ENCODE measurements at regions of chr11 and their contacts with region 1.

Region 1: DNA sequence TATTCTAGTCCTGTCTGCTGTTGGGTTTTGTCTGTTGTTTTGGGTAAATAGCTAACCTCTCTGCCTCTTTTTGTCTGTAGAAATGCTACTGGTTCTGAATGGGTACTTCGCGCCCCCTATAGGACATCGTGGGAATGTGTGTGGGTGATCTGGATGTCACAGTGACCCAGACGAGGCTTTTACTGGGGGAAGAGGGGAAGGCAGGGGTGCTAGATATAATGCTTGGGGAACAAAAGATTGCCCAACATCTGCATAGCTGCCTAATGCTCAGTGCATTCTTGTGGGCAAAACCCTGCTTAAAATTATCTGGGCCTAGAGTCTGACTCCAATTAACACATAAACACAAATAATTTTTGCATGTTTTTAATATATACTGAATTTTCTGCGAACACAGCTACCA is 57.7 kb downstream of the BMAL1 start:
- DNase-seq: no peak
- ATAC-seq: peak; percentile 45
- H3K4me3 ChIP-seq: no peak overlapping the region
- H3K27ac ChIP-seq: no peak overlapping the region
- H3K4me1 ChIP-seq: peaks cover 39% of the 10 kb centered on the region
- H3K27me3 ChIP-seq: no peaks in the 10 kb centered on the region
- CTCF ChIP-seq: peak; percentile 83 to 89 (median 85)
- EP300 ChIP-seq: no peak
- POLR2A ChIP-seq: no peak
- RAD21 ChIP-seq: peak; percentile 87

Region 2: DNA sequence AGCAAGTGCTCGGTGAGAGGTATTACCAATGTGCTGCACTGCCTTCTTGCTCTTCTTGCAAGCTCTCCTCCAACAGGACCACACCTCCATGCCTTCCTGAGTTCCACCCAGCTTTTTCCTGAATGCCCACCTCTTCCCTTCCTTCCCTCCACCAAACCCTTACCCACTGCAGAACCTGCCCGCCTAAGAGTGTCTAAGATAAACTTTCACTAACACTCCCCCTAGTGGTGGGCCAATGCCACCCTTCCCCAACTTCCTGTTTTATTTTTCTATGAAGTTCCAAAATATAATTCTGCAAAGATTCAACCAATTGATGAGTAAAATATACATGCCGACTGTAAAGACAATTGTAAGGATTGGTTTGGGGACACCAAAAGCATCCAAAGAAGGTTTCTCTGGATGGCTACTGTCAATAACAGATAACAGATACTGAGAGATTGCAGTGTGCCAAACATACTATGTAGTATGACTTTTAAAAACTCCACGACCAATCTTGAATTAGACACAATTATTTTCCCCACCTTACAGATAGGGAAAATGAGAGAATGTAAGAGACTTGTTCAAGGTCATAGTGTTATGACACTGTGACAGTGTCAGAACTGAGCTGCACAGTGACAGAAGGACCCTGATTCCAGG is 96.3 kb before region 1 on chr11:
- CTCF ChIA-PET with region 1: interaction called, 29 read pairs
- POLR2A ChIA-PET with region 1: no interaction called
- RAD21 ChIA-PET with region 1: interaction called, 3 read pairs
- SMC1A ChIA-PET with region 1: interaction called, 28 read pairs
- in situ Hi-C with region 1: no loop called
- intact Hi-C with region 1: no loop called
- DNase-seq: no peak
- ATAC-seq: peak; percentile 93
- H3K4me3 ChIP-seq: no peak overlapping the region
- H3K27ac ChIP-seq: no peak overlapping the region
- H3K4me1 ChIP-seq: no peaks in the 10 kb centered on the region
- H3K27me3 ChIP-seq: peaks cover 0 to 3% of the 10 kb centered on the region in 2 experiments; a peak in 2 of 4 replicates
- CTCF ChIP-seq: peak; percentile 71 to 91 (median 86)
- EP300 ChIP-seq: no peak
- POLR2A ChIP-seq: no peak
- RAD21 ChIP-seq: peak; percentile 63

Region 3: DNA sequence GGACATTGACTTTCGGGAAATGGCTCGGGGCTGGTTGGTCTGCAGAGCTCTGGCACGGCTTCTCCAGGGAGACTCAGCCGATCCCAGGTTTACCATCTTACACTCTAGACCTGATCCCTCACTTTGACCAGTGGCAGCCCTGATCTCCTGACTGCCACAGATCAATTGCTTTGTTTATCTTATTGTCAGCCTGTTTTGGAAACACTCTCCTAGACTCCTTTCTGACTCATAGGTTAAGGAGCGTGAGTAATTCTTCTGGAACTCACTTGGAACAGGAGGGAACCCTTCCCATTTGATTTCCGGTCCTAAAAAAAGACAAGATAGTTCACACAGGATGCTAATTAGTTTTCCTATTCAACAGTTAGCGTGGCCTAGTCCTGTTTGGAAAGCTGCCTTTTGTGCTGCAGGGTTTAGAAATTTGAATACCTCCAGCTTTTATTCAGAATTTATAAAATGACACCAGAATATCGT is 73.7 kb before region 1 on chr11:
- CTCF ChIA-PET with region 1: interaction called, 253 read pairs
- POLR2A ChIA-PET with region 1: interaction called, 3 read pairs
- RAD21 ChIA-PET with region 1: interaction called, 7 read pairs
- SMC1A ChIA-PET with region 1: interaction called, 19 read pairs
- in situ Hi-C with region 1: no loop called
- intact Hi-C with region 1: no loop called
- DNase-seq: no peak
- ATAC-seq: no peak
- H3K4me3 ChIP-seq: no peak overlapping the region
- H3K27ac ChIP-seq: no peak overlapping the region
- H3K4me1 ChIP-seq: no peaks in the 10 kb centered on the region
- H3K27me3 ChIP-seq: peaks cover 3 to 5% of the 10 kb centered on the region in 2 experiments; a peak in 2 of 4 replicates
- CTCF ChIP-seq: no peak
- EP300 ChIP-seq: no peak
- POLR2A ChIP-seq: no peak
- RAD21 ChIP-seq: no peak

Region 4: GRCh38 chr11:13289081-13289480 is 46.2 kb before region 1 on chr11:
- CTCF ChIA-PET with region 1: interaction called, 69 read pairs
- POLR2A ChIA-PET with region 1: interaction called, 13 read pairs
- RAD21 ChIA-PET with region 1: interaction called, 65 read pairs
- SMC1A ChIA-PET with region 1: interaction called, 107 read pairs
- in situ Hi-C with region 1: loop called (anchors 5 kb)
- intact Hi-C with region 1: loop called (anchors 2 kb)
- DNase-seq: no peak
- ATAC-seq: no peak
- H3K4me3 ChIP-seq: no peak overlapping the region
- H3K27ac ChIP-seq: no peak overlapping the region
- H3K4me1 ChIP-seq: peaks cover 3% of the 10 kb centered on the region; the same call in 1 of the 2 replicates
- H3K27me3 ChIP-seq: no peaks in the 10 kb centered on the region
- CTCF ChIP-seq: no peak; a peak in 1 of 6 replicates
- EP300 ChIP-seq: no peak
- POLR2A ChIP-seq: no peak
- RAD21 ChIP-seq: no peak

Region 5: DNA sequence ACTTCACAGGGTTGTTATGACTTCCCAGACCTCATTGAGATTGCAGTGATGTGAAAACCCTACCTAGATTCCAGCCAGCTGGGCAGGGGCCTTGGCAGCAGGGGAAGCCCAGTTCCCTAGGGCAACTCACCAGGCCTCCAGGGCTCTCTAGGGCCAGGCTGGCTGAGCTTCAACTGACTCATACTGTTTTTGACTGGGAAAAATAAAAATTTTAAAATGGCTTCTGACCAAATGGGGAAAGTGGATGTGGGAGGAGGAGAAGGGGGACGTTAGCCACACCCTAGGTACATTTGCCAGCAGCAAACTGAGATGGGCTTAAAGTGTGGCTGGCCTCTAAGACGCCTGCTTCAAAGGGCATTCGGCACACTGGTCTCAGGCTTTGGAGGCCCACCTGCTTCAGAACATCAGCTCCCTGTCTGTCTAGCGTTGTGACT is 18.8 kb before region 1 on chr11:
- CTCF ChIA-PET with region 1: interaction called, 149 read pairs
- POLR2A ChIA-PET with region 1: interaction called, 9 read pairs
- RAD21 ChIA-PET with region 1: interaction called, 103 read pairs
- SMC1A ChIA-PET with region 1: interaction called, 226 read pairs
- in situ Hi-C with region 1: no loop called
- intact Hi-C with region 1: loop called (anchors 1 kb)
- DNase-seq: no peak
- ATAC-seq: peak; percentile 84
- H3K4me3 ChIP-seq: no peak overlapping the region
- H3K27ac ChIP-seq: no peak overlapping the region
- H3K4me1 ChIP-seq: peaks cover 21% of the 10 kb centered on the region
- H3K27me3 ChIP-seq: no peaks in the 10 kb centered on the region
- CTCF ChIP-seq: no peak
- EP300 ChIP-seq: 0 out of 4 replicates have a peak, but pooled peaks of 1 of the 2 experiments have one; percentile 22
- POLR2A ChIP-seq: no peak
- RAD21 ChIP-seq: no peak

Region 6: GRCh38 chr11:13668102-13668956 is 333.0 kb after region 1 on chr11 and contains the start of gene FAR1:
- CTCF ChIA-PET with region 1: no interaction called
- POLR2A ChIA-PET with region 1: no interaction called
- RAD21 ChIA-PET with region 1: no interaction called
- SMC1A ChIA-PET with region 1: no interaction called
- in situ Hi-C with region 1: no loop called
- intact Hi-C with region 1: loop called (anchors 10 kb)
- DNase-seq: peak; percentile 95
- ATAC-seq: peak; percentile 91
- H3K4me3 ChIP-seq: peak within 1 kb of the TSS; percentile 77
- H3K27ac ChIP-seq: peak within 1 kb of the TSS; percentile 81
- H3K4me1 ChIP-seq: peaks cover 19% of the 10 kb centered on the region
- H3K27me3 ChIP-seq: no peaks in the 10 kb centered on the region
- CTCF ChIP-seq: peak; percentile 59 to 79 (median 59); a peak in 5 of 6 replicates
- EP300 ChIP-seq: peak in 1 of 2 experiments; percentile 48; a peak in 1 of 4 replicates
- POLR2A ChIP-seq: peak; percentile 81
- RAD21 ChIP-seq: peak; percentile 41; the same call in 1 of the 2 replicates
- polyA plus RNA-seq, gene FAR1: 10.1 to 11.5 TPM

Measured in GM12878 (cell line).